GM12878 (cell line): ENCODE measurements at regions of chr21 and their contacts with region 1.

Region 1: DNA sequence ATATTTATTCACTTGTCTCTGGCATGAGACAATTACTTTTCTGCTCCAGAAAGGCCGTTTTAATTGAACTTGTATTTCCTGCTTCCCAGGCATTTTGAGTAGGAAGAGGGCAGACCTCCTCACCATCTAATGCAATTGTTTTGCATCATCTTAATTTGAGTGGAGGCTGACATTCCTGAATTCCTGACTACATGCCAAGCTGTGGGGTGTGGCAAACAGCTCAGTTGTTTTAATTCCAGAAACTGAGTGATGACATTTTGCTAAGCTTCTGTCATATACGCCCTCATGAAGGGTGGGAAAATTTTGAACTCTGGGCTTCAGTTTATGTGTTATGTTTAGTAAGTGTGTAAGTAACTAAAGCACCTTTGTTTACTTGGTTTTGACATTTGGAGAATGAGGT is 125.4 kb upstream of the USP25 start:
- DNase-seq: no peak
- ATAC-seq: no peak
- H3K4me3 ChIP-seq: no peak overlapping the region
- H3K27ac ChIP-seq: no peak overlapping the region
- H3K4me1 ChIP-seq: no peaks in the 10 kb centered on the region
- H3K27me3 ChIP-seq: no peaks in the 10 kb centered on the region
- CTCF ChIP-seq: no peak
- EP300 ChIP-seq: no peak
- POLR2A ChIP-seq: no peak
- RAD21 ChIP-seq: no peak

Region 2: GRCh38 chr21:15483138-15483780 is 121.2 kb before region 1 on chr21:
- CTCF ChIA-PET with region 1: no interaction called
- POLR2A ChIA-PET with region 1: no interaction called
- RAD21 ChIA-PET with region 1: no interaction called
- SMC1A ChIA-PET with region 1: no interaction called
- in situ Hi-C with region 1: no loop called
- intact Hi-C with region 1: no loop called
- DNase-seq: peak; percentile 45
- ATAC-seq: peak; percentile 100
- H3K4me3 ChIP-seq: no peak overlapping the region
- H3K27ac ChIP-seq: no peak overlapping the region
- H3K4me1 ChIP-seq: no peaks in the 10 kb centered on the region
- H3K27me3 ChIP-seq: no peaks in the 10 kb centered on the region
- CTCF ChIP-seq: peak; percentile 88 to 95 (median 89)
- EP300 ChIP-seq: no peak
- POLR2A ChIP-seq: no peak
- RAD21 ChIP-seq: peak; percentile 96

Region 3: GRCh38 chr21:15651172-15651571 is 46.7 kb after region 1 on chr21:
- CTCF ChIA-PET with region 1: no interaction called
- POLR2A ChIA-PET with region 1: no interaction called
- RAD21 ChIA-PET with region 1: no interaction called
- SMC1A ChIA-PET with region 1: no interaction called
- in situ Hi-C with region 1: no loop called
- intact Hi-C with region 1: no loop called
- DNase-seq: no peak
- ATAC-seq: no peak
- H3K4me3 ChIP-seq: no peak overlapping the region
- H3K27ac ChIP-seq: no peak overlapping the region
- H3K4me1 ChIP-seq: no peaks in the 10 kb centered on the region
- H3K27me3 ChIP-seq: no peaks in the 10 kb centered on the region
- CTCF ChIP-seq: no peak
- EP300 ChIP-seq: no peak
- POLR2A ChIP-seq: no peak
- RAD21 ChIP-seq: no peak

Region 4: GRCh38 chr21:15826147-15826780 is 221.8 kb after region 1 on chr21:
- CTCF ChIA-PET with region 1: no interaction called
- POLR2A ChIA-PET with region 1: no interaction called
- RAD21 ChIA-PET with region 1: no interaction called
- SMC1A ChIA-PET with region 1: no interaction called
- in situ Hi-C with region 1: no loop called
- intact Hi-C with region 1: loop called (anchors 10 kb)
- DNase-seq: peak; percentile 11
- ATAC-seq: peak; percentile 84
- H3K4me3 ChIP-seq: no peak overlapping the region
- H3K27ac ChIP-seq: no peak overlapping the region
- H3K4me1 ChIP-seq: no peaks in the 10 kb centered on the region
- H3K27me3 ChIP-seq: no peaks in the 10 kb centered on the region
- CTCF ChIP-seq: peak; percentile 50 to 79 (median 60); a peak in 5 of 6 replicates
- EP300 ChIP-seq: no peak
- POLR2A ChIP-seq: no peak
- RAD21 ChIP-seq: peak; percentile 75